Esophagus squamous epithelium (tissue), 5 donors: ENCODE measurements at regions of chr19 and their contacts with region 1.

Region 1: GRCh38 chr19:16035601-16036297 is 40.5 kb upstream of the TPM4 start:
- DNase-seq: no peak
- H3K4me3 ChIP-seq: no peak overlapping the region
- H3K27ac ChIP-seq: no peak overlapping the region
- H3K4me1 ChIP-seq: peaks cover 0 to 2% (median 0%) of the 10 kb centered on the region in 3 donors
- H3K27me3 ChIP-seq: no peaks in the 10 kb centered on the region
- CTCF ChIP-seq: no peak
- POLR2A ChIP-seq: no peak

Region 2: GRCh38 chr19:15986701-15987100 is 49.0 kb before region 1 on chr19:
- intact Hi-C with region 1: no loop called
- DNase-seq: no peak
- H3K4me3 ChIP-seq: no peak overlapping the region
- H3K27ac ChIP-seq: no peak overlapping the region
- H3K4me1 ChIP-seq: no peaks in the 10 kb centered on the region
- H3K27me3 ChIP-seq: peaks cover 0 to 44% (median 0%) of the 10 kb centered on the region in 4 donors
- CTCF ChIP-seq: no peak
- POLR2A ChIP-seq: no peak

Region 3: DNA sequence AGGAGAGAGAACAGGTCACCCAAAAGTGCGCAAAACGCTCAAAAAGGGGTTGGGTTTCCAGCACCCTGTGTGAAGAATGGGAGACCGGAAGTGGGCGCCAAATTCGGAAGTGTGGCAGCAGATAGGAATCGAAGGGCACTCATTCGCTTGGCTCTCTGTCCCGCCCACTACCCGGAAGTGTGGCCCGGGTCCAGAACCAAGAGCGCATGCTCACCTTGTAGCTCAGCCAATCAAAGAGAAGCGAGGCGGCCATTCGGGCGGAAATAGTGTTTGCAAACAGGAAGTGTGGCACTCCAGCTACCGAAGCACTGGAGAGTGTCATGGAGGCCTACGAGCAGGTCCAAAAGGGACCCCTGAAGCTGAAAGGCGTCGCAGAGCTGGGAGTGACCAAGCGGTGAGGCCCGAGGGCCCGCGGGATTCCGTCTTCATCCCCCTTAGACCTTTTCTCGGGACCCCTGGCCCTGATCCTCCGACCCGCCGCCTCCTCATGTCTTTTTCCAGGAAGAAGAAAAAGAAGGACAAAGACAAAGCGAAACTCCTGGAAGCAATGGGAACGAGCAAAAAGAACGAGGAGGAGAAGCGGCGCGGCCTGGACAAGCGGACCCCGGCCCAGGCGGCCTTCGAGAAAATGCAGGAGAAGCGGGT is 149.5 kb after region 1 on chr19 and contains the start of gene FAM32A:
- intact Hi-C with region 1: loop called (anchors 5 kb)
- DNase-seq: peak; percentile 97
- H3K4me3 ChIP-seq: peak within 1 kb of the TSS; percentile 52 to 95 (median 84)
- H3K27ac ChIP-seq: peak within 1 kb of the TSS; percentile 84 to 93 (median 85)
- H3K4me1 ChIP-seq: peaks cover 12 to 49% (median 13%) of the 10 kb centered on the region in 3 donors
- H3K27me3 ChIP-seq: no peaks in the 10 kb centered on the region
- CTCF ChIP-seq: peak in 5 of 6 experiments; percentile 39 to 81 (median 43)
- POLR2A ChIP-seq: peak in 3 of 4 donors; percentile 72 to 81 (median 73)
- total RNA-seq, gene FAM32A: 53.5 to 97.4 (median 70.8) TPM